ENCODE measurements at regions of chr1 and their contacts with region 1.

Region 1: DNA sequence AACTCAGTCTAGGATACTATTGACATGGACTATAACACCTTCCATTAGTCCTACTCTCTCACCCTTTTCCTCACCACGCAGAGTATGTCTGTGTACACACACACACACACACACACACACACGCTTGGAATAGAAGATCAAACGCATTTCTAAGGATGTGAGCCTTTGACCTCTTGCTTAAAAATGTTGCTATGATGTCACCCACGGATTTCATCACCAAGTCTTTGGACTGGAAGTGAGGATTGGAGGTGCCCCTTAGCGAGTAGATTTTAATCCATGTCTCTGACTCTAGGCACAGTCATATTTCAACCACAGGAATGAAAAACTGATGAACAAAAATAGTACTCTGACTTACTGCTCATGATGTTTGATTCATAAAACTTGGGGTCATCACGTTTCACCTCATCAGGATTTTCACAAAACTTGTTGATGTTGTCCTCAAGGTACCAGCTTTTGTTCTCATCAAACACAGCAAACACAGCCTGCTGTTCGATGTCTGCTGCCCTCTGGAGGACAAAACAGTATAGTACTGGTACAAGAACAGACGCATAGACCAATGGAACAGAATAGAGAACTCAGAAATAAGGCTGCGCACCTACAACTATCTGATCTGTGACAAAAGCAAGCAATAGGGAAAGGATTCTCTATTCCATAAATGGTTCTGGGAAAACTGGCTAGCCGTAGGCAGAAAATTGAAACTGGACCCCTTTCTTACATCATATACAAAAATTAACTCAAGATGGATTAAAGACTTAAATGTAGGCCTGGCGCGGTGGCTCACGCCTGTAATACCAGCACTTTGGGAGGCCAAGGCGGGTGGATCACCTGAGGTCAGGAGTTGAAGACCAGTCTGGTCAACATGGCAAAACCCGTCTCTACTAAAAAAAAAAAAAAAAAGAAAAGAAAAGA is 39.9 kb downstream of the F5 start:
- DNase-seq: no peak
- H3K4me3 ChIP-seq: no peak overlapping the region
- H3K27ac ChIP-seq: no peak overlapping the region
- H3K4me1 ChIP-seq: no peaks in the 10 kb centered on the region
- H3K27me3 ChIP-seq: peaks cover 0 to 2% (median 0%) of the 10 kb centered on the region in 4 donors
- CTCF ChIP-seq: peak; percentile 36 to 87 (median 81)
- POLR2A ChIP-seq: no peak

Region 2: GRCh38 chr1:169367486-169368405 is 178.6 kb before region 1 on chr1 and contains the starts of genes BLZF1 and NME7:
- intact Hi-C with region 1: loop called (anchors 10 kb)
- DNase-seq: peak; percentile 84
- H3K4me3 ChIP-seq: peak within 1 kb of the TSS; percentile 55 to 82 (median 74)
- H3K27ac ChIP-seq: peak within 1 kb of the TSS; percentile 78 to 93 (median 90)
- H3K4me1 ChIP-seq: peaks cover 0 to 40% (median 4%) of the 10 kb centered on the region in 3 donors
- H3K27me3 ChIP-seq: no peaks in the 10 kb centered on the region
- CTCF ChIP-seq: no peak
- POLR2A ChIP-seq: peak in 2 of 4 donors; percentile 13 to 59
- total RNA-seq, gene BLZF1: 25.7 to 44.6 (median 37.7) TPM
- total RNA-seq, gene NME7: 5.7 to 10.7 (median 7.4) TPM

Region 3: DNA sequence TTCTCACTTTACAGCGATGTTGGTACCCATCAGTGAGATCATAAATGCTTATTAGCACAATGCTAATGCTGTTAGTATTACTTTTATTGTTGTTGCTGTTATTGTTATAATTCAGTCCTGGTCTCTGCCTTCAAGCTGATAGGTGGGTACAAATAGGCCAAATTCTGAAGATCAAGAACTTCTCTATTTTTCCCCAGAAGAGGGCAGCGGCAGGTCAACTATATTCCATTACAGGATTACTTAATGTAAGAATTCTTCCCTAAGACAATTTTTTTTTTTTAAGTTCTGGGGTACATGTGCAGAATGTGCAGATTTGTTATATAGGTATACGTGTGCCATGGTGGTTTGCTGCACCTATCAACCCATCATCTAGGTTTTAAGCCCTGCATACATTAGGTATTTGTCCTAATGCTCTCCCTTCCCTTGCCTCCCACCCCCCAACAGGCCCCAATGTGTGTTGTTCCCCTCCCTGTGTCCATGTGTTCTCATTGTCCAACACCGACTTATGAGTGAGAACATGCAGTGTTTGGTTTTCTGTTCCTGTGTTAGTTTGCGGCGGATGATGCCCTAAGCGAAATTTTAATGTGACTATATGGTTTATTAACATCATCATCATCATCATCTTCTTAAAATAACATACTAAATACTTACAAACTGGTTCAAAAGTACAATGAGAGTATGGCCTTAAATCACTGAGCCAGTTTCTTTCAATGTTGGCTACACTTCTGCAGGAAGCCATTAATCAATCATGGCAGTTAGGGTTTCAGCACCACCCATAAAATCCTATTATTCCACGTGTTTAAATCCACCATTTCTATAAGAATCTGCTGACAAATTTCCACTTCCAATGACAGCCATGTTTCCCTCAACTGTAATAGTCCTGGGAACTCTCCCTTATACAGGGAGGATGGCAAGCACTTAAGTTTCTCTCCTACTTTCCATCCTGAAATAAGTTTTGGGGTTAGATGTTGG is 79.8 kb before region 1 on chr1:
- intact Hi-C with region 1: loop called (anchors 5 kb)
- DNase-seq: no peak
- H3K4me3 ChIP-seq: no peak overlapping the region
- H3K27ac ChIP-seq: no peak overlapping the region
- H3K4me1 ChIP-seq: no peaks in the 10 kb centered on the region
- H3K27me3 ChIP-seq: no peaks in the 10 kb centered on the region
- CTCF ChIP-seq: peak in 5 of 6 experiments; percentile 17 to 48 (median 20)
- POLR2A ChIP-seq: no peak

Region 4: GRCh38 chr1:169941982-169942830 is 395.9 kb after region 1 on chr1:
- intact Hi-C with region 1: no loop called
- DNase-seq: no peak
- H3K4me3 ChIP-seq: no peak overlapping the region
- H3K27ac ChIP-seq: no peak overlapping the region
- H3K4me1 ChIP-seq: peaks cover 0 to 6% (median 0%) of the 10 kb centered on the region in 3 donors
- H3K27me3 ChIP-seq: no peaks in the 10 kb centered on the region
- CTCF ChIP-seq: no peak
- POLR2A ChIP-seq: no peak